ENCODE measurements at regions of chr1 and their contacts with region 1.

Region 1: GRCh38 chr1:109213785-109214468 is at the start of gene SARS1:
- DNase-seq: peak; percentile 37 to 91
- H3K4me3 ChIP-seq: peak within 1 kb of the TSS; percentile 79 to 82
- H3K27ac ChIP-seq: peak within 1 kb of the TSS; percentile 87 to 94
- H3K4me1 ChIP-seq: peaks cover 10 to 22% of the 10 kb centered on the region in 2 donors
- H3K27me3 ChIP-seq: no peaks in the 10 kb centered on the region
- CTCF ChIP-seq: no peak
- total RNA-seq, gene SARS1: 134 TPM

Region 2: DNA sequence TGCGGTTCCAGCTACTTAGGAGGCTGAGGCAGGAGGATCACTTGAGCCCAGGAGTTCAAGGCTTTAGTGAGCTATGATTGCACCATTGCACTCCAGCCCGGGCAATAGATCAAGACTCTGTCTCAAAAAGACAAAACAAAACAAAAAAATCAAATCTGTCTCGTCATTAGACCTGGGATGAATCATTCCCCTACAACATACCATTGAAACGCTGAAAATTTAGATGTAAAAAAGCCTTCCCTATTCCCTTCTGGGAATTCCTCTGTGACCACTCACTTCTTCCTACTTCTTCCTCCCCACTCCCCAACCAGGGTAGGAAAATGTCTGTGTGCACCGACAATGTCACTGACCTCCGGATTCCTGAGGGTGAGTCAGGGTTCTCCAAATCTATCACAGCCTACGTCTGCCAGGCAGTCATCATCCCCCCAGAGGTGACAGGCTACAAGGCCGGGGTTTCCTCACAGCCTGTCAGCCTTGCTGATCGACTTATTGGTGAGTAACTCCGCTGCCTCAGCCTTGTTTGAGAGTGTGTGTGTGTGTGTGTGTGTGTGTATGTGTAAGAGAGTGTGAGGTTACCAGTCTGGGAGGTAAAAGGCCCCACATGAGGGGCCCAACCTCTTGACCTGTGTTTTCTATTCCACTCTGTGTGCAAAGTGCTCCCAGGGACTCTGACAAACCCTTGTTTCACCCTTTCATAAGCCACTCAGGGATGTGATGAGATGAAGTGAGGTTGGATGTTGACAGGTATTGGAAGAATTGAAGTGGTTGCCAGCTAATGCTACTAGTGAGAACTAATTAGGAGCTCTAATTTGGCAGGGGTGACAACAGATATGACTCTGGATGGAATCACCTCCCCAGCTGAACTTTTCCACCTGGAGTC is 16.5 kb before region 1 on chr1:
- intact Hi-C with region 1: loop called (anchors 1 kb)
- DNase-seq: peak in 1 of 2 donors; percentile 83
- H3K4me3 ChIP-seq: no peak overlapping the region
- H3K27ac ChIP-seq: peak overlapping the region; percentile 62 to 76
- H3K4me1 ChIP-seq: peaks cover 3 to 11% of the 10 kb centered on the region in 2 donors
- H3K27me3 ChIP-seq: no peaks in the 10 kb centered on the region
- CTCF ChIP-seq: no peak

Region 3: GRCh38 chr1:109263597-109264398 is 49.9 kb after region 1 on chr1:
- intact Hi-C with region 1: no loop called
- DNase-seq: peak; percentile 34 to 87
- H3K4me3 ChIP-seq: no peak overlapping the region
- H3K27ac ChIP-seq: no peak overlapping the region
- H3K4me1 ChIP-seq: no peaks in the 10 kb centered on the region
- H3K27me3 ChIP-seq: no peaks in the 10 kb centered on the region
- CTCF ChIP-seq: peak; percentile 85 to 97 (median 93)

Region 4: GRCh38 chr1:109282952-109283747 is 69.2 kb after region 1 on chr1 and contains the start of gene PSRC1:
- intact Hi-C with region 1: no loop called
- DNase-seq: peak; percentile 84 to 97
- H3K4me3 ChIP-seq: peak within 1 kb of the TSS; percentile 66 to 84
- H3K27ac ChIP-seq: peak within 1 kb of the TSS; percentile 84 to 91
- H3K4me1 ChIP-seq: peaks cover 0 to 13% of the 10 kb centered on the region in 2 donors
- H3K27me3 ChIP-seq: no peaks in the 10 kb centered on the region
- CTCF ChIP-seq: peak; percentile 45 to 65 (median 64)
- total RNA-seq, gene PSRC1: 1.3 TPM